ENCODE measurements at regions of chr3 and their contacts with region 1.

Region 1: GRCh38 chr3:194315088-194315964 is 35.8 kb downstream of the CPN2 start:
- DNase-seq: peak; percentile 72 to 86
- ATAC-seq: peak; percentile 86 to 89
- H3K4me3 ChIP-seq: peak overlapping the region; percentile 43
- H3K27ac ChIP-seq: peak overlapping the region; percentile 78 to 88
- H3K4me1 ChIP-seq: peaks cover 56% of the 10 kb centered on the region
- CTCF ChIP-seq: peak; percentile 82
- EP300 ChIP-seq: peak in 1 of 2 experiments; percentile 54; a peak in 1 of 5 replicates
- POLR2A ChIP-seq: no peak
- RAD21 ChIP-seq: peak; percentile 86 to 97

Region 2: GRCh38 chr3:193775421-193776077 is 539.8 kb before region 1 on chr3:
- CTCF ChIA-PET with region 1: interaction called, 213 read pairs
- POLR2A ChIA-PET with region 1: interaction called, 8 read pairs
- DNase-seq: no peak
- ATAC-seq: no peak
- H3K4me3 ChIP-seq: no peak overlapping the region
- H3K27ac ChIP-seq: no peak overlapping the region
- H3K4me1 ChIP-seq: peaks cover 9% of the 10 kb centered on the region
- CTCF ChIP-seq: no peak
- EP300 ChIP-seq: no peak
- POLR2A ChIP-seq: no peak
- RAD21 ChIP-seq: no peak

Region 3: DNA sequence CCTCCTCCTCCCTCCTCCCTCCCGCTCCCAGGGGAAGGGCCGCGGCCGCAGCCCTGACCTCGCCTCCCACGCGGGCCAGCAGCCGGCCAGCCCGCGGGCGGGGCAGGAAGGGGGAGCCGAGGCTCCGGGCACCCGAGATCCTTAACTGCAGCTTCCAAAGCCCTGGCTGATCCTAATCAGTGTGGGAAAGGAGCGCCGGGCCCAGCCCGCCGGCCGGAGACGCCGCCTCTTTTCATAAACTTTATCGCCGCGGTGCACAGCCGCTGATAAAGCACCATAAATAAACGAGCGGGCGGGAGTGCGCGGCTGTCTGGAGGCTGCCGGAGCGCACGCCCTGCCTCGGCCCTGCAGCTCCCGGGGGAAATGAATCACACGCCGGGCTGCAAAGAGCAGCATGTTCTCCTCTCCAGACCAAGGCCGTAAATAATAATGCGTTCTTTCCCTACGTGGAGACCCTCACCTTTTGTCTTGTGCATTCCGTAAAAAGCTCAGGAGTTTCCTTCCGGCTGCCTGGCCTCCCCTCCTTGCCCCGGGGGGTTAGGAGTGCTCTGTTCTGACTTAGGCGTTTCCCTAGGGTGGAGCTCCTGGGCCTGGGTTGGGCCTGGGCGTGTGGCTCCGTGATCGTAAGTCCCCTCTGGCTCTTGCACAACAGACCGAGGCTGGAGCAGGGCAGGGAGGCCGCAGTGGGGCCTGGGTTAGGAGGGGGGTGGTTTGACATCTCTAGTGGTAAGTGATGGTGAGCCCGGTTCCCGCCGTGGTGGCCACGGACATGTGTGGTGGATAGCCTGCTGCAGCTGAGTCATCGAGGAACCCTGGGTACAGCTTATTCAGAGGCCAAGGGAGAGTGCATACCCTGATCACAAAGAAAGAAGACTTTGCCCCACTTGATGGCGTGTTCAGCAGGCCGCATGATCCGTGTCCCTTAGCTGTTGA is 311.9 kb before region 1 on chr3:
- CTCF ChIA-PET with region 1: interaction called, 14 read pairs
- POLR2A ChIA-PET with region 1: no interaction called
- DNase-seq: peak; percentile 82 to 95
- ATAC-seq: peak; percentile 95 to 96
- H3K4me3 ChIP-seq: peak overlapping the region; percentile 44
- H3K27ac ChIP-seq: peak overlapping the region; percentile 86 to 95
- H3K4me1 ChIP-seq: peaks cover 33% of the 10 kb centered on the region
- CTCF ChIP-seq: no peak
- EP300 ChIP-seq: peak in 1 of 2 experiments; percentile 42; a peak in 1 of 5 replicates
- POLR2A ChIP-seq: no peak; the same call in 1 of the 2 replicates
- RAD21 ChIP-seq: peak in 1 of 2 experiments; percentile 22; a peak in 2 of 5 replicates

Region 4: GRCh38 chr3:194134757-194135528 is 180.4 kb before region 1 on chr3:
- CTCF ChIA-PET with region 1: interaction called, 116 read pairs
- POLR2A ChIA-PET with region 1: interaction called, 11 read pairs
- DNase-seq: peak; percentile 68 to 97
- ATAC-seq: peak; percentile 60 to 71
- H3K4me3 ChIP-seq: peak overlapping the region; percentile 51
- H3K27ac ChIP-seq: peak overlapping the region; percentile 99
- H3K4me1 ChIP-seq: peaks cover 54% of the 10 kb centered on the region
- CTCF ChIP-seq: no peak
- EP300 ChIP-seq: peak; percentile 69 to 86; a peak in 3 of 5 replicates
- POLR2A ChIP-seq: no peak
- RAD21 ChIP-seq: peak; percentile 7 to 59; a peak in 4 of 5 replicates

Region 5: DNA sequence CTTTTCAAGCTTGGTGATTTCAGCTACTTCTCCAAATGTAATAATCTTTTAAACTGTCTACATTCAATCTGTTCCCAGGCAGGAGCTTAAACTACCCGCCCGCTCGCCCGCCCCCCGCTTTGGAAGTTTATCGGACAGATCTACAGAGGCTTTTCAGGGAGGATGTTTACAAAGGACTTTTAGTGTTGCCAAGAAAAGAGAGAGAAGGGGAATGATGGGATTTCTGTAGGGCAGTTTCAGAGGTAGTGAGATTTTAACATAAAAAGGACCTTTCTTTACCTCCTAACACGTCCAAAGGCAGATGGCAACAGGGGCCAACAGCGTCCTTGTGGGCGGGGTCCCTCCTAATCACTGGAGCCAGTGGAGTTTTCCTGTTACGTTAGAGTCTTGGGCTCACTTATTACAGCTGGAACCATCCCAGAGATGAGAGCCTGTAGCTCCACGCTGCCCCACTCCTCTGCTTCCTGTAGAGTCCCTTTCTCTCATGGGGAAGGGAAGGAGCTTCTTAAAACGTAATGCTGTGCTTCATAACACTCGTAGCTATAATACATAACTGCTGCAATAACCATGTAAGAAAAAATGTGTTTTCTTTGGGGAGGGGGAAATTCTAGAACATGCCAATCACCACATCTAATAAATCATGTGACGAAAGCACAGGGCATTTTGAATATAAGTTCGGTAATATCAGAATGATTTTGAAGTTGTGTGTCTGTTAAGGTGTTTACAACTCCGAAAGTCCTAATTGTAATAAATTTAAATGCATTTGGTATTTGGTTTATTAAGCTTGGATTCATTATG is 148.4 kb before region 1 on chr3:
- CTCF ChIA-PET with region 1: interaction called, 19 read pairs
- POLR2A ChIA-PET with region 1: no interaction called
- DNase-seq: no peak
- ATAC-seq: no peak
- H3K4me3 ChIP-seq: no peak overlapping the region
- H3K27ac ChIP-seq: no peak overlapping the region
- H3K4me1 ChIP-seq: no peaks in the 10 kb centered on the region
- CTCF ChIP-seq: no peak
- EP300 ChIP-seq: no peak
- POLR2A ChIP-seq: no peak
- RAD21 ChIP-seq: no peak

Region 6: DNA sequence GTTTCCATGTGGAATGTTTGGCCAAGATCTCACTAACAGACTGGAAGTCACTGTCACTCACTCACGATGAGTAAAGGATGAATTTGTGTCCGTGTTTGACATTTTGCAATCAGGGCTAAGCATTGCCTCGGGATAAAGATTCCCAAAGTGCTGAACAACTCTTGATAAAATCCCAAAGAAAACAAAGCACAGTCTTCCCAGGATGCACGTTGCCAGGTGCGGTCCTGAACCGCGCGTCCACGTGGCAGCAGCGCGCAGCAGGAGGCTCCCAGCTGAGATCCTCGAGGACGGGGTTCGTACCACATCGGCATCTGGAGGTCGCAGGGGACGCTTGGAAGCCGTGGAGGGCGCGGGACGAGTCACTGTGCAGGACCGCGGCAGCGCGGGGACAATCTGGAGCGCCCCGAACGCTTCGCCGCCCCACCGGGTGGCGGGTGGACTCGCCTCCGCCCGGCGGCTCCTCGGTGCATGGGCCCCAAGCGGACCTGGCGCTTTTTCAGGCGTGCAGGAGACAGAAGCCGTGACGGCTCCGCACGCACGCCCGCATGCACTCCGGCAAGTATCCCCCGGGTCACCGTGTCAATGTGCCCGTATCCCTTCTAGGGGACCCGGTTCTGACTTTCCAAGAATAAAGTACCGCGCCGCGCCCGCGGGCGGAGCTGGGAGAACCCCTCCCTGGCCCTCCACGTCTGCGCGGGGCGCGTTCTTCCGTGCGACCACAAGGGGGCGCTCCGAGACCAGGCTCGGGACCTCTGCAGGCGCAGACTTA is 18.1 kb after region 1 on chr3:
- CTCF ChIA-PET with region 1: interaction called, 17 read pairs
- POLR2A ChIA-PET with region 1: no interaction called
- DNase-seq: peak; percentile 47 to 82
- ATAC-seq: peak; percentile 87 to 97
- H3K4me3 ChIP-seq: peak overlapping the region; percentile 45
- H3K27ac ChIP-seq: peak overlapping the region; percentile 69 to 93
- H3K4me1 ChIP-seq: peaks cover 25% of the 10 kb centered on the region
- CTCF ChIP-seq: peak; percentile 86
- EP300 ChIP-seq: no peak
- POLR2A ChIP-seq: no peak; the same call in 1 of the 2 replicates
- RAD21 ChIP-seq: peak; percentile 90 to 95

Measured in A549 (cell line).